Right ventricle myocardium superior (tissue), 1 donor: ENCODE measurements at regions of chr2 and their contacts with region 1.

Region 1: GRCh38 chr2:196783431-196784094 is 15.9 kb downstream of the GTF3C3 start:
- DNase-seq: no peak
- ATAC-seq: no peak

Region 2: GRCh38 chr2:197416268-197416667 is 632.7 kb after region 1 on chr2:
- intact Hi-C with region 1: loop called (anchors 10 kb)
- DNase-seq: no peak
- ATAC-seq: no peak